Prostate gland (tissue), 2 donors: ENCODE measurements at regions of chr11 and their contacts with region 1.

Region 1: DNA sequence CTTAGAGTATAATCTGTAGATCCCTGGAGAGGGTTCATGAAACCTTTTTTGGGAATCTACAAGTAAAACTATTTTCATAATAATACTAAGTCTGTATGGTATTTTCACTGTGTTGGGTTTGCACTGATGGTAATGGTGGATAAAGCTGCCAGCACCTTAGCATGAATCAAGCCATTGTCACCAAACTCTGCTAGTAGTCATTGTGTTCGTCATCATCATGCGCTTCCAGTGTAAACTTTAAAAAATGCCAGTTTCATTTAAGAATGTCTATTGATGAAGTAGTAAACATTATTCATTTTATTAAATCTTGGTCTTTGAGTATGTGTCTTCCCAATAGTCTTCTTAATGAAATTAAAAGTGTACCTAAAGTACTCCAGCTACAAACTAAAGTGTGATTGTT is 15.0 kb downstream of the ALKBH3 start:
- DNase-seq: no peak
- H3K4me3 ChIP-seq: no peak overlapping the region
- H3K27ac ChIP-seq: peak overlapping the region in 1 of 2 donors; percentile 61
- H3K4me1 ChIP-seq: peaks cover 9% of the 10 kb centered on the region
- H3K27me3 ChIP-seq: no peaks in the 10 kb centered on the region
- CTCF ChIP-seq: no peak
- POLR2A ChIP-seq: no peak

Region 2: GRCh38 chr11:43825217-43825816 is 70.3 kb before region 1 on chr11:
- intact Hi-C with region 1: no loop called
- DNase-seq: peak; percentile 15
- H3K4me3 ChIP-seq: no peak overlapping the region
- H3K27ac ChIP-seq: no peak overlapping the region
- H3K4me1 ChIP-seq: no peaks in the 10 kb centered on the region
- H3K27me3 ChIP-seq: no peaks in the 10 kb centered on the region
- CTCF ChIP-seq: peak in 3 of 4 experiments; percentile 35 to 42 (median 37)
- POLR2A ChIP-seq: no peak

Region 3: GRCh38 chr11:43944761-43945311 is 49.2 kb after region 1 on chr11:
- intact Hi-C with region 1: loop called (anchors 2 kb)
- DNase-seq: peak; percentile 52
- H3K4me3 ChIP-seq: peak overlapping the region in 1 of 2 donors; percentile 58
- H3K27ac ChIP-seq: peak overlapping the region; percentile 62 to 82
- H3K4me1 ChIP-seq: peaks cover 6% of the 10 kb centered on the region
- H3K27me3 ChIP-seq: no peaks in the 10 kb centered on the region
- CTCF ChIP-seq: peak; percentile 63 to 85 (median 72)
- POLR2A ChIP-seq: no peak